HEK293T (cell line): ENCODE measurements at regions of chr2 and their contacts with region 1.

Region 1: GRCh38 chr2:175251425-175252041 is 70.0 kb upstream of the ATP5MC3 start:
- DNase-seq: peak; percentile 25

Region 2: DNA sequence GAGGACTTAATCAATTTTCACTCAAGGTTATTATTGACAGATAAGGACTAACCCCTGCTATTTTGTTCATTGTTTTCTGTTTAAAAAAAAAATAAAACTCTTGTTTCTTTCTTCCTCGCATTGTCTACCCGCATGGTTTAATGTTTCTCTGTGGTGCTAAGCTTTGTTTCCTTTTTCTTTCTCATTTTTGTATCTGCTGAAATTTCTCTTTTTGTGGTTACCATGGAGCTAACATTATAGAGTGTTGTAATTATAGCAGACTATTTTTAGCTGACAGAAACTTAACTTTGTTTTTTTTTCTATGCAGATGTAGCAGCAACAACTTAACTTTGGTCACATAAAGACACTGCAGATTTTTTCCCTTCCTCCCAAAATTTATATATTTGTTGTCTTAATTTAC is 203.3 kb before region 1 on chr2:
- CTCF ChIA-PET with region 1: no interaction called
- POLR2A ChIA-PET with region 1: no interaction called
- DNase-seq: no peak

Region 3: GRCh38 chr2:175282290-175282689 is 30.8 kb after region 1 on chr2:
- CTCF ChIA-PET with region 1: interaction called, 15 read pairs
- POLR2A ChIA-PET with region 1: no interaction called
- DNase-seq: peak; percentile 53